ENCODE measurements at regions of chr4 and their contacts with region 1.

Region 1: GRCh38 chr4:36399762-36400353 is 118.4 kb downstream of the DTHD1 start:
- DNase-seq: peak; percentile 24
- ATAC-seq: peak; percentile 82
- H3K4me3 ChIP-seq: no peak overlapping the region
- H3K27ac ChIP-seq: no peak overlapping the region
- H3K4me1 ChIP-seq: no peaks in the 10 kb centered on the region; the same call in 1 of the 2 replicates
- H3K27me3 ChIP-seq: no peaks in the 10 kb centered on the region
- CTCF ChIP-seq: peak; percentile 68 to 85 (median 73)
- EP300 ChIP-seq: no peak
- POLR2A ChIP-seq: no peak
- RAD21 ChIP-seq: peak; percentile 99

Region 2: GRCh38 chr4:36180206-36180605 is 219.7 kb before region 1 on chr4:
- CTCF ChIA-PET with region 1: interaction called, 36 read pairs
- POLR2A ChIA-PET with region 1: no interaction called
- RAD21 ChIA-PET with region 1: interaction called, 5 read pairs
- SMC1A ChIA-PET with region 1: interaction called, 10 read pairs
- in situ Hi-C with region 1: no loop called
- intact Hi-C with region 1: no loop called
- DNase-seq: no peak
- ATAC-seq: no peak
- H3K4me3 ChIP-seq: no peak overlapping the region
- H3K27ac ChIP-seq: no peak overlapping the region
- H3K4me1 ChIP-seq: peaks cover 3% of the 10 kb centered on the region; the same call in 1 of the 2 replicates
- H3K27me3 ChIP-seq: no peaks in the 10 kb centered on the region
- CTCF ChIP-seq: no peak
- EP300 ChIP-seq: no peak
- POLR2A ChIP-seq: no peak
- RAD21 ChIP-seq: no peak

Region 3: GRCh38 chr4:36249610-36250009 is 150.2 kb before region 1 on chr4:
- CTCF ChIA-PET with region 1: interaction called, 73 read pairs
- POLR2A ChIA-PET with region 1: interaction called, 3 read pairs
- RAD21 ChIA-PET with region 1: interaction called, 43 read pairs
- SMC1A ChIA-PET with region 1: interaction called, 71 read pairs
- in situ Hi-C with region 1: no loop called
- intact Hi-C with region 1: no loop called
- DNase-seq: no peak
- ATAC-seq: peak; percentile 26; the same call in 2 of the 3 replicates
- H3K4me3 ChIP-seq: no peak overlapping the region
- H3K27ac ChIP-seq: no peak overlapping the region
- H3K4me1 ChIP-seq: no peaks in the 10 kb centered on the region; the same call in 1 of the 2 replicates
- H3K27me3 ChIP-seq: no peaks in the 10 kb centered on the region
- CTCF ChIP-seq: no peak
- EP300 ChIP-seq: no peak
- POLR2A ChIP-seq: no peak
- RAD21 ChIP-seq: no peak

Region 4: DNA sequence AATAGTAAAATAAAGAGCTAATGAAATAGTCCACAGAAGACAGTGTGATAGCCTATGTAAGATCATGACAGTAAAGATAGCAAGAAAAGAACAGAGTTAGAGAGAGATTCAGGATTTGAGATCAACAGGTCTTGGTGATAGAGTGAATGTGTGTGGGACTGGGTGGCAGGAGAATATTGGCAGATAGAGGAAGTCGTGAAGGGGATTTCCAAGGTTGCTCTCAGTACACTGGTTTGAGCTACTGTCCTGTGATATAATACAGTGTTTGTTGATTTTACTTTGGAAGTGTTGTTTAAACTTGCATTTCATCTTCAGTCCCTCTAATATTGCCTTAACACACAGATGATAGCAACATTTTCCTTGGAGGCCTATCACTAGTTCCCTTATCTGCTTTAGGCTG is 74.4 kb before region 1 on chr4:
- CTCF ChIA-PET with region 1: interaction called, 23 read pairs
- POLR2A ChIA-PET with region 1: no interaction called
- RAD21 ChIA-PET with region 1: interaction called, 6 read pairs
- SMC1A ChIA-PET with region 1: interaction called, 6 read pairs
- in situ Hi-C with region 1: no loop called
- intact Hi-C with region 1: no loop called
- DNase-seq: peak; percentile 59
- ATAC-seq: peak; percentile 92
- H3K4me3 ChIP-seq: no peak overlapping the region
- H3K27ac ChIP-seq: peak overlapping the region; percentile 93
- H3K4me1 ChIP-seq: peaks cover 57% of the 10 kb centered on the region
- H3K27me3 ChIP-seq: no peaks in the 10 kb centered on the region
- CTCF ChIP-seq: no peak
- EP300 ChIP-seq: 0 out of 4 replicates have a peak, but pooled peaks of 1 of the 2 experiments have one; percentile 16
- POLR2A ChIP-seq: no peak
- RAD21 ChIP-seq: no peak

Region 5: DNA sequence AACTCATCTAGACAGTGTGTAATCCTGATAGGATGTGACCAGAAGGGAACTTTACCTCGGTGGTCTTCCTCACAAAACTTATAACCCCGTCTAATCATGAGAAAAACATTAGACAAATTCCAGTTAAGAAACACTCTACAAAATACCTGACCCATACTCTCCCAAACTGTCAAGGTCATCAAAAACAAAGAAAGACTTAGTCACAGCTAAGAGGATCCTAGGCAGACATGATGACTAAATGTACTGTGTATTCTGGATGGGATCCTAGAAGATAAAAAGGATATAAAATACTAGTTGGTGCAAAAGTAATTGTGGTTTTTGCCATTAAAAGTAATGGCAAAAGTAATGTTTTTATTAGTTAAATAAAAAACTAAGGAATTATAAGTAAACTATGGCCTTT is 36.8 kb before region 1 on chr4:
- CTCF ChIA-PET with region 1: interaction called, 26 read pairs
- POLR2A ChIA-PET with region 1: no interaction called
- RAD21 ChIA-PET with region 1: interaction called, 12 read pairs
- SMC1A ChIA-PET with region 1: interaction called, 41 read pairs
- in situ Hi-C with region 1: no loop called
- intact Hi-C with region 1: no loop called
- DNase-seq: no peak
- ATAC-seq: no peak
- H3K4me3 ChIP-seq: no peak overlapping the region
- H3K27ac ChIP-seq: no peak overlapping the region
- H3K4me1 ChIP-seq: no peaks in the 10 kb centered on the region
- H3K27me3 ChIP-seq: no peaks in the 10 kb centered on the region
- CTCF ChIP-seq: no peak
- EP300 ChIP-seq: no peak
- POLR2A ChIP-seq: no peak
- RAD21 ChIP-seq: no peak

Region 6: GRCh38 chr4:37389967-37390580 is 990.2 kb after region 1 on chr4:
- CTCF ChIA-PET with region 1: interaction called, 21 read pairs
- POLR2A ChIA-PET with region 1: no interaction called
- RAD21 ChIA-PET with region 1: interaction called, 6 read pairs
- SMC1A ChIA-PET with region 1: interaction called, 14 read pairs
- in situ Hi-C with region 1: no loop called
- intact Hi-C with region 1: no loop called
- DNase-seq: no peak
- ATAC-seq: peak; percentile 84
- H3K4me3 ChIP-seq: no peak overlapping the region
- H3K27ac ChIP-seq: no peak overlapping the region
- H3K4me1 ChIP-seq: no peaks in the 10 kb centered on the region
- H3K27me3 ChIP-seq: no peaks in the 10 kb centered on the region
- CTCF ChIP-seq: peak; percentile 62 to 75 (median 70)
- EP300 ChIP-seq: no peak
- POLR2A ChIP-seq: no peak
- RAD21 ChIP-seq: peak; percentile 79